Common myeloid progenitor, CD34-positive (primary cell): ENCODE measurements at regions of chr10 and their contacts with region 1.

Region 1: DNA sequence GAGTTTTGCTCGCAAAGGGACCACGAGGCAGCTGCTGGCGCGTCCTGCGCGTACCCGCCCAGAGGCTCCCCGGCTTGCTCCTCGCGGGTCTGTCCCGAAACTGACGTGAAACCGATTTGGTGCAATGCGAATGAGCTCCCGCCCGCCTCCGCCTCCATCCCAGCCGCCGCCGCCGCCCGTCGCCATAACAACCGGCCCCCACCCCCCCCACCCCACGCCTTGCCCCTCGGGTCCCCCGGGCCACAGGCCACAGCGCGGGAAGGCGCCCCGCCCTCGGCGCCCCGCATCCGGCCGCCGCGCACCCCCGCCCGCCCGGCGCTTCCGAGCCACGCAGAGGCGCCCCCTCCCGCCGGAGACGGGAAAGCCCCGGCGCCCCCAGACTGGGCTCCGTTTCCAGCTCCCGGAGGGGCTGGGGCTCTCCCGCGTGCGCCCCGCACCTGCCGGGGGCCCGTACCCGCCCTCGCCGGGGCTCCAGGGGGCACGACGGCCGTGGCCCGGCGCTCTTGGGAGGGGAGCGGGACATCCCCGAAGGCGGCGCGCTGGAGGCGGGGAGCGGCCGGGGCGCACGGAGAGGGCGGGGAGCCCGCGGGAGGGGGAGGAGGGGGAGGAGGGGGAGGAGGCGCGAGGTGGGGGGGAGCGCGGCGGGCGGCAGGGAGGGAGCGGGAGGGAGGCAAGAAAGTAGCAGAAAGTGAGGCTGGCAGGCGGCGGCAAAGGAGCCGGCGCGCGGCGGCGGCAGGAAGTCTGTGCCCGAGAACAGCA is at the start of gene CAMK1D:
- DNase-seq: peak; percentile 93 to 98 (median 97)
- H3K4me3 ChIP-seq: peak within 1 kb of the TSS; percentile 67 to 96 (median 80)
- H3K27ac ChIP-seq: peak within 1 kb of the TSS; percentile 64 to 79
- H3K4me1 ChIP-seq: peaks cover 8 to 40% (median 35%) of the 10 kb centered on the region in 4 experiments
- H3K27me3 ChIP-seq: no peaks in the 10 kb centered on the region

Region 2: DNA sequence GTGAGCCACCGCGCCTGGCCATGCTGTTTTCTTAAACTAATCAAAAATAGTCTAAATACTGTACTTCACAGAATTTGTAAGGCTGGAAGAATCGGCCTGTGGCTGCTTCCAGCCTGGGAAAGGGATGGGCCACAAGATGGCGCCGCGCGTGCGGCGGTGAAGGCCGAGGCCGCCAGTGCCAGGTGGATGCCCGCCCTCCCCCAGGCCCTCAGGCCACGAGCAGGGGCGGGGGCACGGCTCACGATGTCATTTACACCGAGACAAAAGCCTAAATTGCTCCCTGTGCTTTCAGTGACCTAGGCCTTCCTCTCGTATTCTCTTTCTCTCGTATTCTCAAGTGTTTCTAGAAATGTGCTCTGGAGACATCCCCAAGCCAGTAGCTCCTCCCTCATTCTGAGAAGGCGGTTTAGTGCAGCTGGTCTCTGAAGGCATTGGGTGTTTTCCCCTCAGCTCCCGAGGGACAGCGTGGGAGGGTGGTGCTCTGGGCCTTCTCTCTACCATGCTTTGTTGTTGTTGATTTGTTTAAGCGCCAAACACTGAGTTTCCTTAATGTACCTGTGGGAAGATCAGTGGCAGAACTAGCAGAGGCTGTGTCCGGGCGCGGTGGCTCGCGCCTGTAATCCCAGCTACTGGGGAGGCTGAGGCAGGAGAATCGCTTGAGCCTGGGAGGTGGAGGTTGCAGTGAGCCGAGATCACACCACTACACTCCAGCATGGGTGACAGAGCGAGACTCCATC is 84.7 kb before region 1 on chr10:
- CTCF ChIA-PET with region 1: interaction called, 10 read pairs
- POLR2A ChIA-PET with region 1: interaction called, 17 read pairs
- DNase-seq: peak; percentile 87 to 94 (median 93)
- H3K4me3 ChIP-seq: peak overlapping the region in 3 of 7 experiments; percentile 26 to 51 (median 50)
- H3K27ac ChIP-seq: peak overlapping the region; percentile 65 to 95
- H3K4me1 ChIP-seq: peaks cover 15 to 46% (median 34%) of the 10 kb centered on the region in 4 experiments
- H3K27me3 ChIP-seq: no peaks in the 10 kb centered on the region

Region 3: GRCh38 chr10:12333380-12334185 is 15.5 kb before region 1 on chr10:
- CTCF ChIA-PET with region 1: interaction called, 6 read pairs
- POLR2A ChIA-PET with region 1: interaction called, 10 read pairs
- DNase-seq: peak; percentile 92 to 98 (median 98)
- H3K4me3 ChIP-seq: peak overlapping the region in 3 of 7 experiments; percentile 11 to 43 (median 24)
- H3K27ac ChIP-seq: peak overlapping the region; percentile 72 to 84
- H3K4me1 ChIP-seq: peaks cover 17 to 38% (median 29%) of the 10 kb centered on the region in 4 experiments
- H3K27me3 ChIP-seq: no peaks in the 10 kb centered on the region

Region 4: DNA sequence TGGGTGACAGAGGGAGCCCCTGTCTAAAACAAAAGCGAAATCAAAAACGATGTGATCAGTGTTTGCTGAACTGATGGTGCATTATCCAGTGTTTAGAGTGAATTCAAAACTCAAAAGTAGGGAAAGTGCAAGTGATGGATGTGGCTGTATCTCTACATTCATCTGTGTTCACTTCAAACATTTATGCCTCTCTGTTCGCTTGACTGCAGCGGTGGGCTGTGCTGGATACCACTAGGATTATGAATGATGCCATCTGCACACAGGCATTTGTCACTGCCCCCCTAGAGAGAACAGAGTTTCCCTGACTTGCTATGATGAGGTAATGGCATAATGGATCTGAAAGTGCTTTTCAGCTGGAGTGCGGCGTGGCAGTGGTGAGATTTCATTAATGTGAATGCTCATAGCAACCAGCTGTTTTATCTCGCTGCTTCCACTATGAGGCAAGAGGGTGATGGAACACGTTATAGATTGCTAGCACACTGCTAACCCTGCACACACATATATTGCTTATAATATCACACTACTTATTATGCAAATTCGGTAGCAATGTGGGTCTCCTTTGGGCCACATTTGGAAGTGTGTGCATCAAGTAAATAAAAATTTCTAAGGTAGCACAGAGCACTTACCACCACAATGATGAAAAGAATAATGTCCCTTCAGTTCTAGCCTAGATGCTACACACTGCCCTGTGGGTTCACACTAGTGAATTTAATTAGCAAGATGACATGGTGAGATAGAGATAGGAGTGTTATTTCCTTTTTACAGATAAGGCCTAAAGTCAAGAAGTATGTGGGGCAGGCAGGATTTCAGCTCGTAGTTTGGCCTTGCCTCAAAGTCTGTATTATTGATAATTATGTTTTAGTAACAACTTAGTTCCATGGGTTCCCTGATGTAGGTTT is 165.0 kb after region 1 on chr10:
- CTCF ChIA-PET with region 1: no interaction called
- POLR2A ChIA-PET with region 1: no interaction called
- DNase-seq: peak in 2 of 3 donors; percentile 23 to 37
- H3K4me3 ChIP-seq: no peak overlapping the region
- H3K27ac ChIP-seq: no peak overlapping the region
- H3K4me1 ChIP-seq: peaks cover 3 to 30% (median 18%) of the 10 kb centered on the region in 4 experiments
- H3K27me3 ChIP-seq: no peaks in the 10 kb centered on the region